CD4-positive, alpha-beta T cell (primary cell): ENCODE measurements at regions of chr2 and their contacts with region 1.

Region 1: DNA sequence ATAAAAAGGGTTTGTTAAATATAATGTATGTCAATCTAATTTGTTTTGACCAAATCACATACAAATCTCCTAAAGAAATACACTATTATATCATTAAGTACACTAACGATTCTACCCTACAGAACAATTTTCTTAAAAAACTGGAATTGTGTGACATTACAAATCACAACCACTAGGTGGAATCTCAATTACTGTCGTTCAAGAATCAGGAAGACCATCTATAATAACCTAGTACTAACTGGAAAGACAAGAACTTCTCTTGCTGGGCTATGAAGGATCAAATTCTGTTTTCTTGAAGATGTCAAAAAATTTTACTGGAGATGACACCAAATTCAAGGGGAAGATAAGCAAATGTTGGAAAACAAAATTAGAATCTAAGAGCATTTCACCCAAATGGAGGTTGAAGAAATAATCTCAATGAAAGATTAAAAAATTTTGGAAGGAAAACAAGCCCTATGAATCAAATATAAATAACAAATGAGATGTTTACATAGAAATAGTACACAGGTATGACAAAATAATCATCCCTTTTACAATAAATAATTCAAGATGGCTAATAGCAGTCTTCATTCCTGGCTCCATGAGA is 110.9 kb downstream of the STK39 start:
- DNase-seq: peak in 3 of 14 experiments; percentile 57 to 59 (median 58)
- ATAC-seq: peak; percentile 57
- H3K4me3 ChIP-seq: no peak overlapping the region
- H3K4me3 Mint-ChIP-seq: no peak overlapping the region
- H3K27ac ChIP-seq: no peak overlapping the region
- H3K27ac Mint-ChIP-seq: no peak overlapping the region
- H3K4me1 ChIP-seq: no peaks in the 10 kb centered on the region
- H3K4me1 Mint-ChIP-seq: peaks cover 5% of the 10 kb centered on the region
- H3K27me3 ChIP-seq: no peaks in the 10 kb centered on the region
- H3K27me3 Mint-ChIP-seq: no peaks in the 10 kb centered on the region
- CTCF ChIP-seq: peak; percentile 82

Region 2: GRCh38 chr2:168336864-168337263 is 200.4 kb after region 1 on chr2:
- CTCF ChIA-PET with region 1: interaction called, 4 read pairs
- POLR2A ChIA-PET with region 1: no interaction called
- intact Hi-C with region 1: loop called (anchors 1 kb)
- DNase-seq: peak; percentile 36 to 79 (median 53)
- ATAC-seq: peak; percentile 98
- H3K4me3 ChIP-seq: no peak overlapping the region
- H3K4me3 Mint-ChIP-seq: no peak overlapping the region
- H3K27ac ChIP-seq: no peak overlapping the region
- H3K27ac Mint-ChIP-seq: no peak overlapping the region
- H3K4me1 ChIP-seq: peaks cover 6% of the 10 kb centered on the region
- H3K4me1 Mint-ChIP-seq: no peaks in the 10 kb centered on the region
- H3K27me3 ChIP-seq: peaks cover 0 to 5% of the 10 kb centered on the region in 2 experiments
- H3K27me3 Mint-ChIP-seq: no peaks in the 10 kb centered on the region
- CTCF ChIP-seq: peak; percentile 50

Region 3: GRCh38 chr2:168699844-168700417 is 563.4 kb after region 1 on chr2:
- CTCF ChIA-PET with region 1: no interaction called
- POLR2A ChIA-PET with region 1: no interaction called
- intact Hi-C with region 1: loop called (anchors 5 to 10 kb)
- DNase-seq: no peak
- ATAC-seq: no peak
- H3K4me3 ChIP-seq: no peak overlapping the region
- H3K4me3 Mint-ChIP-seq: no peak overlapping the region
- H3K27ac ChIP-seq: no peak overlapping the region
- H3K27ac Mint-ChIP-seq: no peak overlapping the region
- H3K4me1 ChIP-seq: no peaks in the 10 kb centered on the region
- H3K4me1 Mint-ChIP-seq: peaks cover 10% of the 10 kb centered on the region
- H3K27me3 ChIP-seq: no peaks in the 10 kb centered on the region
- H3K27me3 Mint-ChIP-seq: no peaks in the 10 kb centered on the region
- CTCF ChIP-seq: no peak

Region 4: DNA sequence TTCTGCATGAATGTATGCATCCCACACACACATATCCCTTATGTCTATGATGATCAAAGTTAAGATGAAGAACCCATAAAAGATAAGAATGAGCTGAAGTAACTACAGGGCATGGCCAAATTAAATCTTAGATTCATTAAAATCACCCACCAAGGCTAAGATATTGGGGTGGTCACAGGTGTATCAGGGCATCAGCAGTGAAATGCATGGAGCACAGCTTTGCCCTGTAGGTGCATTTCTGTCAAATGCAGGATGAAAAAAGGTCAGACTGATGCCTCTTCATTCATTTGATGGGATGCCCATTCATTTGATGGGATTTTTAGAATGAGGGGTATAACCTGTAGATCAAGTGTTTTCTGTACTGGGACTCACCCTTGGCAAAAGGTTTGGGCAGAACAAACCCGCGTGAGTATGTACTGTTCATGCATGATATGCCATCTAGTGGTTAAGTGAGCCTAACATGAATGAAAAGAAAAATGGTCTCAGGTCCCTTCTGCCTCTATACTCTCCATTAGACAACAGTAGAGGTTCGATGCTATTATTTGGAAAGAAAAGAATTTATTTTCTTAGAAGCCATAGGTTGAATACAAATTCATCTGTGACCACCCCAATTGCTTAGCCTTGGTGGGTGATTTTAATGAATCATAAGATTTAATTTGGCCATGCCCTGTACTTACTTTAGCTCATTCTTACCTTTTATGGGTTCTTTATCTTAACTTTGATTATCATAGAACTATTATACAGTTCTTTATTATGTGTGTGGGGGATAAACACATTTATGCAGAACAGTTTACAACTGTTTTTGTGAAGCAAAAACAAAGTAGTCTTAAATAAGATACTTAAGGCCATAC is 622.7 kb after region 1 on chr2:
- CTCF ChIA-PET with region 1: no interaction called
- POLR2A ChIA-PET with region 1: no interaction called
- intact Hi-C with region 1: loop called in 1 of 2 experiments (anchors 5 kb)
- DNase-seq: peak in 7 of 14 experiments; percentile 8 to 70 (median 33)
- ATAC-seq: peak; percentile 72
- H3K4me3 ChIP-seq: no peak overlapping the region
- H3K4me3 Mint-ChIP-seq: no peak overlapping the region
- H3K27ac ChIP-seq: no peak overlapping the region
- H3K27ac Mint-ChIP-seq: no peak overlapping the region
- H3K4me1 ChIP-seq: peaks cover 37% of the 10 kb centered on the region
- H3K4me1 Mint-ChIP-seq: peaks cover 50% of the 10 kb centered on the region
- H3K27me3 ChIP-seq: no peaks in the 10 kb centered on the region
- H3K27me3 Mint-ChIP-seq: no peaks in the 10 kb centered on the region
- CTCF ChIP-seq: peak; percentile 77